Caco-2 (cell line): ENCODE measurements at regions of chrX and their contacts with region 1.

Region 1: GRCh38 chrX:41734530-41734929 is 10.5 kb downstream of the GPR82 start:
- DNase-seq: peak in 1 of 2 experiments; percentile 16
- H3K4me3 ChIP-seq: no peak overlapping the region
- H3K4me3 Mint-ChIP-seq: no peak overlapping the region
- H3K27ac Mint-ChIP-seq: no peak overlapping the region
- H3K4me1 ChIP-seq: no peaks in the 10 kb centered on the region
- H3K4me1 Mint-ChIP-seq: peaks cover 7% of the 10 kb centered on the region
- H3K27me3 ChIP-seq: no peaks in the 10 kb centered on the region
- H3K27me3 Mint-ChIP-seq: no peaks in the 10 kb centered on the region
- CTCF ChIP-seq: peak; percentile 24 to 36

Region 2: GRCh38 chrX:41558531-41558930 is 176.0 kb before region 1 on chrX:
- CTCF ChIA-PET with region 1: no interaction called
- POLR2A ChIA-PET with region 1: no interaction called
- intact Hi-C with region 1: loop called (anchors 5 kb)
- DNase-seq: no peak
- H3K4me3 ChIP-seq: no peak overlapping the region
- H3K4me3 Mint-ChIP-seq: no peak overlapping the region
- H3K27ac Mint-ChIP-seq: no peak overlapping the region
- H3K4me1 ChIP-seq: no peaks in the 10 kb centered on the region
- H3K4me1 Mint-ChIP-seq: peaks cover 2% of the 10 kb centered on the region
- H3K27me3 ChIP-seq: no peaks in the 10 kb centered on the region
- H3K27me3 Mint-ChIP-seq: no peaks in the 10 kb centered on the region
- CTCF ChIP-seq: peak in 1 of 2 experiments; percentile 24